Heart right ventricle (tissue), 16 donors: ENCODE measurements at regions of chrX and their contacts with region 1.

Region 1: DNA sequence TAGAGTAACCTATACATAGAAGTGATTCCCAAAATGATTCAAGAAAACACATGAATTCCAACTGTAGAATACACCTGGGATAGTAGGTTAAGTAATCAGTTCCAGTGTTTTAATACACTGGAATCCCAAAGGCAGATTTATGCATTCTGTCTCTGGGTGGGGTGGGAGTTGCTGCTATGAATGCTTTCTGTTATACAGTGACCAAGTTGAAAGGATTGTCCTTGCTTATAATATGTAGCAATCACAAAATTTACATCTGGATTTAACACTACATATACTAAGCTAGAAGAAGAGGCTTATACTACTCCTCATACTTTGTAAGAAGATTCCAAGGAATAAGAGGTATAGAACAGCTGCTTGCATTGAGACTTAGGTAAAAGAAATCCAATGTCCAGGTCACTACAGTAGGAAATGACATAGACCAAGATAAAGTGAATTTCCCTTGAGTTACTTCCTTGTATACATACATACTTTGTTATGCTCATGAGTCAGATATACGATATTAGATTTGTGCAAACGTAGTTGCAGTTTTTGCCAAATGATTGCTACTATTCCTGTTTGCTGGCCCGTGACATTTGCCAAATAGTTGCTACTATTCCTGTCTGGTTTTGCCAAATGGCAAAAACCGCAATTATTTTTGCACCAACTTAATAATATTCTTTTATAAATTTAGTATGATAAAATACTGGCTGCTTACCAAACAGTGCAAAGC is 210.5 kb upstream of the DIAPH2 start:
- DNase-seq: no peak
- ATAC-seq: no peak
- H3K4me3 ChIP-seq: no peak overlapping the region
- H3K27ac ChIP-seq: no peak overlapping the region
- H3K4me1 ChIP-seq: no peaks in the 10 kb centered on the region
- H3K27me3 ChIP-seq: peaks cover 0 to 4% (median 0%) of the 10 kb centered on the region in 7 donors
- CTCF ChIP-seq: no peak

Region 2: DNA sequence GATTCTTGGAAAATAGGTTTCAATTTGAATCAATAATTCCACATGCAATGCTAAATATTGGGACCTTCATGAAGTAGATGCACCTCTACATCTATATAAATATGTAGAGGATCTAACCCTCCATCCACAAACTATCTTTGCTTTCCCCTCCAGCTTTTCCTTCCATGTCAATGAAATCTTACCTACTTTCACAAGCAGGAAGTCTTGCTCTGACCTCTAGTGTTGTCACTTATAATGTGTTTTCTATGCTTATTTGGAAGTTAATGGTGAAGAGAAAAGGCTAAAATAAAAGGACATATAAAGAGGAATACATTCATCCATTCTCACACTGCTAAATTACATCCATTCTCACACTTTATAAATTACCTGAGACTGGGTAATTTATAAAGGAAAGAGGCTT is 262.2 kb before region 1 on chrX:
- intact Hi-C with region 1: no loop called
- DNase-seq: no peak
- ATAC-seq: no peak
- H3K4me3 ChIP-seq: no peak overlapping the region
- H3K27ac ChIP-seq: no peak overlapping the region
- H3K4me1 ChIP-seq: no peaks in the 10 kb centered on the region
- H3K27me3 ChIP-seq: no peaks in the 10 kb centered on the region
- CTCF ChIP-seq: no peak

Region 3: DNA sequence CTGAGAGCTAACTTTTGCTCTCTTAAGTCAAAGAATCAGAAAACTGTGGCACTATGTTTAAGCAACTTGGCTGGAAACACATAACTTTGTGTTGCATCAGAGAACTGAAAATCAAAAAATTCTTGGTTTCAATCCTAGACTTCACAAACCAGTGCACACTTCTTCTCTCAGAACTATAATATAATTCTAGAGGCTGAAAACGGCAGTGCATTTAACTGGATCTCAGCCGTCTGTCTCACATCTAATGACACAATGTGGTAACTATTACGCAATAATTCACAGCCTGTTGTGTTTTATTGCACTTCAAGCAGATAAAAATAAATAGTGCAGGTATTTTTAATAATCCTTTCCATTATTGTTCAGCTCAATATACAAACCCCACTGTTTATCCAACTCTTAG is 50.2 kb before region 1 on chrX:
- intact Hi-C with region 1: loop called in 1 of 10 experiments (anchors 1 kb)
- DNase-seq: no peak
- ATAC-seq: no peak
- H3K4me3 ChIP-seq: no peak overlapping the region
- H3K27ac ChIP-seq: no peak overlapping the region
- H3K4me1 ChIP-seq: peaks cover 0 to 10% (median 0%) of the 10 kb centered on the region in 9 donors
- H3K27me3 ChIP-seq: peaks cover 0 to 9% (median 0%) of the 10 kb centered on the region in 7 donors
- CTCF ChIP-seq: no peak

Region 4: GRCh38 chrX:96445531-96446065 is 28.6 kb before region 1 on chrX:
- intact Hi-C with region 1: no loop called
- DNase-seq: no peak
- ATAC-seq: no peak
- H3K4me3 ChIP-seq: no peak overlapping the region
- H3K27ac ChIP-seq: no peak overlapping the region
- H3K4me1 ChIP-seq: no peaks in the 10 kb centered on the region
- H3K27me3 ChIP-seq: peaks cover 0 to 43% (median 0%) of the 10 kb centered on the region in 7 donors
- CTCF ChIP-seq: no peak